Posterior vena cava (tissue), 2 donors: ENCODE measurements at regions of chr2 and their contacts with region 1.

Region 1: DNA sequence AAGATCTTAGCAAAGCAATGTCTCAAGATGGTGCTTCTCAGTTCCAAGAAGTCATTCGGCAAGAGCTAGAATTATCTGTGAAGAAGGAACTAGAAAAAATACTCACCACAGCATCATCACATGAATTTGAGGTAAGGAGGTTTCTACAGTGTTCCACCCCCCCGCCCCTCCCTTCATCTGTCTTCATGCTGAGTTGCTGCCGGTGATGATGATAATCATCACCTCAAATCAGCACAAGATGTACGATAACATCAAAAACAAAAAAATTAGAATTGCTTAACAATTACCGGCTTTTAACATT is 14.6 kb downstream of the UGP2 start:
- DNase-seq: no peak

Region 2: DNA sequence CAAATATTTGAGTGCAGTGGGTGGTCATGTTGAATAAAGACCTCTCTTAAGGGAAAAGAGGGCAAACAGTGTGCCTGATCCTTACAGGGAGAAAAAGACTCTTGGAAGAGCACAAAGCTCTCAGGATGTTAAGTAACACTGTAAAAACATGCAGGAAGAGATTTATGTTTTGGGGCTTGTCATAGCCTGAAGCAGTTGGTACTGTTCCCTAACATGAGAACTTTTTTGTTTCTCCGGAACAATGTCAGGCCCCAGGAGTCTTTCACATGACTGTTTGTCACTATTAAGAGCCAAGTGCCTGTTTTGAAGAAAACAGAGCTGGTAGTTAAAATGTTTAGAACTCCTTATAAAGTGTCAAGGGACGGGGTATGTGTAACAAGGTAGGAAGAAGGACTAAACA is 1744.1 kb before region 1 on chr2:
- intact Hi-C with region 1: no loop called
- DNase-seq: no peak

Region 3: GRCh38 chr2:63679252-63679855 is 176.9 kb before region 1 on chr2:
- intact Hi-C with region 1: no loop called
- DNase-seq: no peak

Region 4: GRCh38 chr2:63827749-63828148 is 28.5 kb before region 1 on chr2:
- intact Hi-C with region 1: loop called in 1 of 2 experiments (anchors 2 kb)
- DNase-seq: no peak

Region 5: GRCh38 chr2:63871864-63872263 is 15.6 kb after region 1 on chr2:
- intact Hi-C with region 1: loop called in 1 of 2 experiments (anchors 2 kb)
- DNase-seq: no peak